ENCODE measurements at regions of chr11 and their contacts with region 1.

Region 1: GRCh38 chr11:33742249-33742851 is 6.1 kb upstream of the CD59 start:
- DNase-seq: no peak
- ATAC-seq: peak; percentile 42
- H3K4me3 Mint-ChIP-seq: no peak overlapping the region
- H3K27ac Mint-ChIP-seq: no peak overlapping the region
- H3K4me1 Mint-ChIP-seq: no peaks in the 10 kb centered on the region
- H3K27me3 Mint-ChIP-seq: no peaks in the 10 kb centered on the region
- CTCF ChIP-seq: peak; percentile 53

Region 2: GRCh38 chr11:33362051-33362910 is 380.1 kb before region 1 on chr11:
- CTCF ChIA-PET with region 1: interaction called, 10 read pairs
- POLR2A ChIA-PET with region 1: no interaction called
- intact Hi-C with region 1: loop called (anchors 10 kb)
- DNase-seq: peak; percentile 25
- ATAC-seq: peak; percentile 64
- H3K4me3 Mint-ChIP-seq: no peak overlapping the region
- H3K27ac Mint-ChIP-seq: no peak overlapping the region
- H3K4me1 Mint-ChIP-seq: no peaks in the 10 kb centered on the region
- H3K27me3 Mint-ChIP-seq: peaks cover 11% of the 10 kb centered on the region
- CTCF ChIP-seq: peak; percentile 78

Region 3: GRCh38 chr11:33700425-33701271 is 41.7 kb before region 1 on chr11 and contains the start of gene C11orf91:
- CTCF ChIA-PET with region 1: interaction called, 23 read pairs
- POLR2A ChIA-PET with region 1: no interaction called
- intact Hi-C with region 1: no loop called
- DNase-seq: peak; percentile 95
- ATAC-seq: peak; percentile 95
- H3K4me3 Mint-ChIP-seq: peak within 1 kb of the TSS; percentile 82
- H3K27ac Mint-ChIP-seq: peak within 1 kb of the TSS; percentile 37
- H3K4me1 Mint-ChIP-seq: peaks cover 17% of the 10 kb centered on the region
- H3K27me3 Mint-ChIP-seq: peaks cover 7% of the 10 kb centered on the region
- CTCF ChIP-seq: no peak
- total RNA-seq, gene C11orf91: not detected

Region 4: GRCh38 chr11:33716236-33716635 is 26.1 kb before region 1 on chr11:
- CTCF ChIA-PET with region 1: interaction called, 108 read pairs
- POLR2A ChIA-PET with region 1: no interaction called
- intact Hi-C with region 1: loop called (anchors 2 kb)
- DNase-seq: peak; percentile 53
- ATAC-seq: peak; percentile 66
- H3K4me3 Mint-ChIP-seq: no peak overlapping the region
- H3K27ac Mint-ChIP-seq: no peak overlapping the region
- H3K4me1 Mint-ChIP-seq: peaks cover under 1% of the 10 kb centered on the region
- H3K27me3 Mint-ChIP-seq: no peaks in the 10 kb centered on the region
- CTCF ChIP-seq: peak; percentile 21

Region 5: DNA sequence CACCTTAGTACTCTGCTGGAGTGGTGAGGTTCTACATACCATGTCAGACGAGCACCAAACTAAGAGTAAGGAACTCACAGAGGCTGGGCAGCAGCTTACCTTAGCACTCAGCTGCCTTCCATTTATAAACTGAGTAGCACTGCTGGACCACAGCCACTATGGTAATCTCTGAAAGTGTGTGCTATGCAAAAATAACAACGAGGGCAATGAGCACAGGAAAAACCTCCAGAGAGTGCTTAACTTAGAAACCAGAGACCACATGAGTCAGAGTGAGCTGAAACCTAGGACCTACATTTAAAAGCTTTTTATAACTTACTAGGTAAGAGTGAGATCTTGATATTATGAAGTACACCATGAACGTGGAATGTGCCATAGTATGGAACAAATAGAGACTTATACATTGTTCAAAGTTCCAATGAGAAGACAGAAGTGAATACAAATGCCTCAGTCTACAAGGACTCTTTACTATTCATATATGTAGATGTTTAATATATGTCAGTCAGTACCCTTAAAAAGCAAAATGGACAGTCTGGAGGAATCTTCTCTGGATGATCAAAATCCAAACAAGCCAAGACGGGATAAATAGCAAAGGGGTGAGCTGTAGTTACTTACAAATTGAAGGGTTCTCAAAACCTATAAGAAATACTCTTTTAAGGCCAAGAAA is 11.1 kb after region 1 on chr11:
- CTCF ChIA-PET with region 1: interaction called, 17 read pairs
- POLR2A ChIA-PET with region 1: interaction called, 3 read pairs
- intact Hi-C with region 1: no loop called
- DNase-seq: no peak
- ATAC-seq: peak; percentile 91
- H3K4me3 Mint-ChIP-seq: no peak overlapping the region
- H3K27ac Mint-ChIP-seq: peak overlapping the region; percentile 6
- H3K4me1 Mint-ChIP-seq: peaks cover 8% of the 10 kb centered on the region
- H3K27me3 Mint-ChIP-seq: no peaks in the 10 kb centered on the region
- CTCF ChIP-seq: no peak

Region 6: GRCh38 chr11:33808228-33808828 is 66.0 kb after region 1 on chr11:
- CTCF ChIA-PET with region 1: no interaction called
- POLR2A ChIA-PET with region 1: no interaction called
- intact Hi-C with region 1: no loop called
- DNase-seq: peak; percentile 92
- ATAC-seq: peak; percentile 92
- H3K4me3 Mint-ChIP-seq: no peak overlapping the region
- H3K27ac Mint-ChIP-seq: no peak overlapping the region
- H3K4me1 Mint-ChIP-seq: peaks cover 2% of the 10 kb centered on the region
- H3K27me3 Mint-ChIP-seq: peaks cover 9% of the 10 kb centered on the region
- CTCF ChIP-seq: peak; percentile 88

Region 7: GRCh38 chr11:33842236-33842915 is 100.0 kb after region 1 on chr11:
- CTCF ChIA-PET with region 1: no interaction called
- POLR2A ChIA-PET with region 1: no interaction called
- intact Hi-C with region 1: no loop called
- DNase-seq: no peak
- ATAC-seq: no peak
- H3K4me3 Mint-ChIP-seq: no peak overlapping the region
- H3K27ac Mint-ChIP-seq: no peak overlapping the region
- H3K4me1 Mint-ChIP-seq: no peaks in the 10 kb centered on the region
- H3K27me3 Mint-ChIP-seq: peaks cover 20% of the 10 kb centered on the region
- CTCF ChIP-seq: no peak

Region 8: GRCh38 chr11:33959855-33960400 is 217.6 kb after region 1 on chr11:
- CTCF ChIA-PET with region 1: no interaction called
- POLR2A ChIA-PET with region 1: no interaction called
- intact Hi-C with region 1: no loop called
- DNase-seq: no peak
- ATAC-seq: no peak
- H3K4me3 Mint-ChIP-seq: no peak overlapping the region
- H3K27ac Mint-ChIP-seq: no peak overlapping the region
- H3K4me1 Mint-ChIP-seq: no peaks in the 10 kb centered on the region
- H3K27me3 Mint-ChIP-seq: peaks cover 13% of the 10 kb centered on the region
- CTCF ChIP-seq: no peak

Region 9: GRCh38 chr11:34075178-34075820 is 332.9 kb after region 1 on chr11:
- CTCF ChIA-PET with region 1: no interaction called
- POLR2A ChIA-PET with region 1: no interaction called
- intact Hi-C with region 1: no loop called
- DNase-seq: no peak
- ATAC-seq: no peak
- H3K4me3 Mint-ChIP-seq: no peak overlapping the region
- H3K27ac Mint-ChIP-seq: peak overlapping the region; percentile 67
- H3K4me1 Mint-ChIP-seq: peaks cover 41% of the 10 kb centered on the region
- H3K27me3 Mint-ChIP-seq: no peaks in the 10 kb centered on the region
- CTCF ChIP-seq: no peak